ENCODE measurements at regions of chr10 and their contacts with region 1.

Region 1: GRCh38 chr10:124916585-124917427 is 25.1 kb upstream of the ZRANB1 start:
- DNase-seq: peak; percentile 93 to 97 (median 96)
- ATAC-seq: peak; percentile 95
- H3K4me3 ChIP-seq: peak overlapping the region; percentile 97
- H3K4me3 Mint-ChIP-seq: peak overlapping the region; percentile 86 to 99 (median 94)
- H3K27ac ChIP-seq: peak overlapping the region; percentile 98
- H3K27ac Mint-ChIP-seq: peak overlapping the region; percentile 89 to 99 (median 94)
- H3K4me1 ChIP-seq: peaks cover 15 to 17% of the 10 kb centered on the region in 2 donors
- H3K4me1 Mint-ChIP-seq: peaks cover 30 to 49% (median 44%) of the 10 kb centered on the region in 7 donors
- H3K27me3 ChIP-seq: no peaks in the 10 kb centered on the region
- H3K27me3 Mint-ChIP-seq: peaks cover 0 to 8% (median 0%) of the 10 kb centered on the region in 5 donors

Region 2: DNA sequence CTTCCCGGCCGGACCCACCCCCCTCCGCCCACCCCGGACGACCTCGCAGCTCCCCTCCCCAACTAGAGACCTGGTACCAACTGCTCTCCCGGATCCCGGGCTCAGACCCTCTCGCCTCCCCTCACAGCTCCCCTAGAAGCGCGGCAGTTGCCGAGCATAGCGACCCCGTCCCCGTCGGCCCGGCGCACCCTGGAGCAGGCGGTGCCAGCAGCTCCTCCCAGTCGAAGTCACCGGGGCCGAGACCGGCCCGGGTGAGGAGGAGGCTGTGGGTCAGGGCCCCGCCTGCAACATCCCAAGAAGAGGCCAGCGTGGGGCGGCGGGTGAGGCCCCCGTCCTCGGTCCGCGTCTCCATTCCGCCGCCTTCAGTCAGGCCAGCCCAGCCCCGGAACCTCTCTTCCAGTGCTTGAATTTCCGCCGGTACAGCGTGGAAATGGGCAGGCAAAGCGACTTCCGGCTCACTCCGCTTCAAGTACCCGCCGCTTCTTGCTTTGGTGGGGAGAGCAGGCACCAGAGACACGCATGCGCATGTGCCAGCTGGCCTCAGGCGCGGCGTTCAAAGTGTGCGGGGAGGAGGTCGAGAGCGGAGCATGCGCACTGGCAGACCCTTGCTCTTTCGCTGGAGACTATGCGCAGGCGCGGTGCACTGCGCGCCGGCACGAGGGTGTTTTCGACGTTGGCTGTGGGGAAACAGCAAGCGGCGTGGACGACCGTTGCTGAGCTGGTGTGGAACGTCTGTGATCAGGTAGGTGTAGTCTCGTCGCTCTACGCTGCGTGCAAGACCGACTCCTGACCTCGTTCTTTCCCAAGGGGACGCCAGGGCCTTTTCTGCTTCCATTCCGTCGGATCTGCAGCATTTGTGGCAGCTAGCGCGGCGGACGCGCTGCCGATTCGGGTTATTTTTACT is 1962.7 kb before region 1 on chr10 and contains the start of gene C10orf88:
- CTCF ChIA-PET with region 1: no interaction called
- POLR2A ChIA-PET with region 1: no interaction called
- intact Hi-C with region 1: loop called in 1 of 2 experiments (anchors 5 kb)
- DNase-seq: peak; percentile 92 to 98 (median 97)
- ATAC-seq: peak; percentile 97
- H3K4me3 ChIP-seq: peak within 1 kb of the TSS; percentile 69
- H3K4me3 Mint-ChIP-seq: peak within 1 kb of the TSS; percentile 85 to 96 (median 90)
- H3K27ac ChIP-seq: peak within 1 kb of the TSS; percentile 72
- H3K27ac Mint-ChIP-seq: peak within 1 kb of the TSS; percentile 77 to 98 (median 90)
- H3K4me1 ChIP-seq: peaks cover 16% of the 10 kb centered on the region in 2 donors
- H3K4me1 Mint-ChIP-seq: peaks cover 26 to 60% (median 39%) of the 10 kb centered on the region in 7 donors
- H3K27me3 ChIP-seq: no peaks in the 10 kb centered on the region
- H3K27me3 Mint-ChIP-seq: peaks cover 0 to 14% (median 0%) of the 10 kb centered on the region in 5 donors
- total RNA-seq, gene C10orf88: 5.2 to 16.8 (median 12.5) TPM

Region 3: GRCh38 chr10:124388823-124389612 is 527.8 kb before region 1 on chr10:
- CTCF ChIA-PET with region 1: no interaction called
- POLR2A ChIA-PET with region 1: interaction called, 3 read pairs
- intact Hi-C with region 1: loop called in 1 of 2 experiments (anchors 1 kb)
- DNase-seq: peak; percentile 80 to 98 (median 91)
- ATAC-seq: peak; percentile 99
- H3K4me3 ChIP-seq: peak overlapping the region; percentile 68
- H3K4me3 Mint-ChIP-seq: peak overlapping the region in 7 of 10 donors; percentile 25 to 71 (median 59)
- H3K27ac ChIP-seq: peak overlapping the region; percentile 62
- H3K27ac Mint-ChIP-seq: peak overlapping the region in 1 of 9 donors; percentile 49
- H3K4me1 ChIP-seq: peaks cover 4 to 5% of the 10 kb centered on the region in 2 donors
- H3K4me1 Mint-ChIP-seq: peaks cover 0 to 2% (median 0%) of the 10 kb centered on the region in 7 donors
- H3K27me3 ChIP-seq: no peaks in the 10 kb centered on the region
- H3K27me3 Mint-ChIP-seq: peaks cover 0 to 7% (median 5%) of the 10 kb centered on the region in 5 donors

Region 4: DNA sequence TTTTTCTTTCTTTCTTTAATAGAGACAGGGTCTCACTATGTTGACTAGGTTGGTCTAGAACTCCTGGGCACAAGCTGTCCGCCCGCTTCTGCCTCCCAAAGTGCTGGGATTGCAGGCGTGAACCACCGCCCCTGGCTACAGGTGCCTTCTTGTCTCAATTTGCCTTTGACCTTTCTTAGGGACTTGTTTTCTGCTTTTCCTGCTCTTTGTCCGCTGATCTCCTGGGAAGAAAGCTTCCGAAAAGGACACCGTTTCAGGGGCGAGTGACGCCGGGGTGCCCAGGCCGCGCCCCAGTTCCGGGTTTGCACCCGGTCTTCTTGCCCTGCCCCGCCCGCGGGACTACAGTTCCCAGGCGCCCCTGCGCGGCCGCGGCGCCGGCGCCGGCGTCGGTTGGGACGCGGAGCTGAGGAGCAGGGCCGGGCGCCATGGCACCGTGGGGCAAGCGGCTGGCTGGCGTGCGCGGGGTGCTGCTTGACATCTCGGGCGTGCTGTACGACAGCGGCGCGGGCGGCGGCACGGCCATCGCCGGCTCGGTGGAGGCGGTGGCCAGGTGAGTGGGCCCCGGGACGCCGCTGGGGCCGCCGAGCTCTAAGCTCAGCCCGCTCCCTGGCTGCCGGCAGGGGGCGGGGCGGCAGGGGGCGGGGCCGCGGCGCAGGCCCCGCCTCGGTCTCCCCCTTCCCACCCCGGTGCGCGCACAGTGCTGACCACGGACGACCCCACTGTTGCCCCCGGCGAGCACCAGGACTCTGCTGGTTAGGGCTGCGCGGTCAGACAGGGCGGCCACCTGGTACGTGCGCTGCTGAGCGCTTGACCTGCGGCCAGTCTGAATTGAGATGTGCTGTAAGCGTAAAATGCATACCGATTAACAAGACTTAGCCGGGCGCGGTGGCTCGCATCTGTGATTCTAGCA is 455.1 kb before region 1 on chr10 and contains the start of gene LHPP:
- CTCF ChIA-PET with region 1: no interaction called
- POLR2A ChIA-PET with region 1: interaction called, 7 read pairs
- intact Hi-C with region 1: loop called (anchors 1 kb)
- DNase-seq: peak; percentile 77 to 91 (median 87)
- ATAC-seq: peak; percentile 98
- H3K4me3 ChIP-seq: peak within 1 kb of the TSS; percentile 76
- H3K4me3 Mint-ChIP-seq: peak within 1 kb of the TSS; percentile 69 to 96 (median 90)
- H3K27ac ChIP-seq: peak within 1 kb of the TSS; percentile 76
- H3K27ac Mint-ChIP-seq: peak within 1 kb of the TSS; percentile 82 to 98 (median 96)
- H3K4me1 ChIP-seq: peaks cover 13 to 21% of the 10 kb centered on the region in 2 donors
- H3K4me1 Mint-ChIP-seq: peaks cover 23 to 35% (median 28%) of the 10 kb centered on the region in 7 donors
- H3K27me3 ChIP-seq: no peaks in the 10 kb centered on the region
- H3K27me3 Mint-ChIP-seq: peaks cover 0 to 17% (median 11%) of the 10 kb centered on the region in 5 donors
- total RNA-seq, gene LHPP: 19.8 to 31.2 (median 27.6) TPM

Region 5: DNA sequence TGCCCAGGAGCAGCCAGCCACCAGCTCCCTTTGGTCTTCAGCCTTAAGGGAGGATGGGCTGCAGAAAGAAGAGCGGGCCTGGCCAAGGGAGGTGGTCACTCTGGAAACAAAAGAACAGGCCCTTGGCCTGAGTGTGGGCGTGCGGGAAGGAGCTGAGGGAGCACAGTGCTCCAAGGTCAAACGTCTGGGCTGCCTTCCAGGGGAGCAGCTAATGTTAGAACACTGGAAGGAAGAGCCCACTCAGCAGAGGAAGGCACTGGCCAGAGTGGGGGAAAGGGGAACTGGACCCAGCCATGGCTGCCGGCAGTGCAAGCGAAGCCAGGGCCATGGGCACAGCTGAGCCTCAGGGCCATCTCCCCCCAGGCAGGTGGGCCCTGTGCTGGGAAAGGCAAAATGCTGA is 215.4 kb before region 1 on chr10:
- CTCF ChIA-PET with region 1: no interaction called
- POLR2A ChIA-PET with region 1: no interaction called
- intact Hi-C with region 1: no loop called
- DNase-seq: no peak
- ATAC-seq: no peak
- H3K4me3 ChIP-seq: no peak overlapping the region
- H3K4me3 Mint-ChIP-seq: peak overlapping the region; percentile 43 to 84 (median 58)
- H3K27ac ChIP-seq: peak overlapping the region; percentile 67
- H3K27ac Mint-ChIP-seq: peak overlapping the region; percentile 66 to 98 (median 92)
- H3K4me1 ChIP-seq: peaks cover 94% of the 10 kb centered on the region in 2 donors
- H3K4me1 Mint-ChIP-seq: peaks cover 85 to 100% (median 96%) of the 10 kb centered on the region in 7 donors
- H3K27me3 ChIP-seq: no peaks in the 10 kb centered on the region
- H3K27me3 Mint-ChIP-seq: no peaks in the 10 kb centered on the region

Region 6: DNA sequence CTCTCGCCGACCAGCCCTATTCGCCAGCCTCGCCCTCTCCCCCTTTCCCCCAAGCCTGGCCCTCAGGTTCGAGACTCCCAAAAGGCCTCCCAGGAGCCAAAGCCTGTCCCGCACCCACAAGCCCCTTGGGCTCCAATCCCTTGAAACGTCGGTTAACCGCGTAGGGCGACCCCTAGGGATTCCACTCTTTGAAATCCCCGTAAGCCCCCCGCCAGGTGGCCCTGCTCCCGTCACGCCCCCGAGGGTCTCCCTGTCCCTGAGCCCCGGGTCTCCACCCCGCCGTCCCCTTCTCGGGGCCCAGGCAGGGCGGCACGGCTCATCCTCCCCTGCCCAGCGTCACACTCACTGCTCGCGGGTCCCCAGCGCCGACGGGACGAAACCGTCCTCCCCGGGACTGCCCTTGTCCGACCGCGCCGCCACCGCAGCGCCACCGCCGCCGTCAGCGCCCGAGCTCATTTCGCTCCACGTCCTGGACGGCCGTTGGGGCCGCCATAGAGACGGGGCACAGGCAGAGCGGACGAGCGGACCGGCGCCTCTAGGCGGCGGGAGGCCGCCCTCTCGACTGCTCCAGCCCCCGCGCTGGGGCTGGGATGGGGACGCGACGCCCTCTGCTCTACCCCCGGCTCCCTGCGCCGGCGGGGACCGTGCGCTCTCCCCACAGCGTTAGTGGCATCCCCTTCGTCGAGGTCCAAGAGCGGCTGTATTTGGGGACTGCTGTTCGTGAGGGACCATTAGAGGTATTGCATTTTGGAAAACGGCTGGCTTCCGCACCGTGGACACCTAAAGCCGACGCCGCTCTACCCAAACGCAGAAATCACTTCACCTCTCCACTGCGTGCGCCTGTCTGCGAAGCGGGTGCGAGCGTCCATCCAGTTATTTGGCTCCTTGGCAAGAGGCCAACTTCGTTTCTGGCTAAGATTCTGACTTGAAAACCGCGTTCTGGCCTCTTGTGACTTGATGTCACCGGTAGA is 125.1 kb before region 1 on chr10 and contains the start of gene EEF1AKMT2:
- CTCF ChIA-PET with region 1: interaction called, 3 read pairs
- POLR2A ChIA-PET with region 1: interaction called, 6 read pairs
- intact Hi-C with region 1: loop called (anchors 1 kb)
- DNase-seq: peak; percentile 68 to 88 (median 81)
- ATAC-seq: peak; percentile 99
- H3K4me3 ChIP-seq: peak within 1 kb of the TSS; percentile 92
- H3K4me3 Mint-ChIP-seq: peak within 1 kb of the TSS; percentile 90 to 100 (median 98)
- H3K27ac ChIP-seq: peak within 1 kb of the TSS; percentile 77
- H3K27ac Mint-ChIP-seq: peak within 1 kb of the TSS; percentile 89 to 96 (median 95)
- H3K4me1 ChIP-seq: peaks cover 5 to 9% of the 10 kb centered on the region in 2 donors
- H3K4me1 Mint-ChIP-seq: peaks cover 11 to 30% (median 21%) of the 10 kb centered on the region in 7 donors
- H3K27me3 ChIP-seq: no peaks in the 10 kb centered on the region
- H3K27me3 Mint-ChIP-seq: peaks cover 0 to 7% (median 0%) of the 10 kb centered on the region in 5 donors
- total RNA-seq, gene EEF1AKMT2: 11.5 to 23.0 (median 21.0) TPM

Region 7: DNA sequence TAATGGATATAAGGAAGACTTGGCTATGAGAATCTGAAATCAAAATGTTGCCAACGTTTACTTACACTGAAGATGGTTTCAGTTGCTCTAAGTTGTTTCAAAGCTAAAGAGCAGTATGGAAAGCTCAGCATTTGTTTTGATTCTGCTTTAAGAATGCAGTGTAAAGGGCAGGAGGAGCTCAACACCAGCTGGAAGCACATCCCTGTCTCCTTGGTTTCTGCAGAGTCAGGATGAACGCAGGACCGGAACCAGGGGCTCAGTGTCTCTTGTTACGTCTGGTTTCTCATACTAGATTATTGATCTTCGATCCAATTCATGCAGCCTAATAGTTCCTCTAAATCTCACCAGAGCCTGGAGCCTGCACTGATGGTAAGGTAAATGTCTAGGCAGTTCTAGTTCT is 49.2 kb after region 1 on chr10:
- CTCF ChIA-PET with region 1: no interaction called
- POLR2A ChIA-PET with region 1: interaction called, 3 read pairs
- intact Hi-C with region 1: loop called in 1 of 2 experiments (anchors 5 kb)
- DNase-seq: no peak
- ATAC-seq: no peak
- H3K4me3 ChIP-seq: no peak overlapping the region
- H3K4me3 Mint-ChIP-seq: no peak overlapping the region
- H3K27ac ChIP-seq: no peak overlapping the region
- H3K27ac Mint-ChIP-seq: no peak overlapping the region
- H3K4me1 ChIP-seq: peaks cover 0 to 6% of the 10 kb centered on the region in 2 donors
- H3K4me1 Mint-ChIP-seq: peaks cover 14 to 75% (median 67%) of the 10 kb centered on the region in 7 donors
- H3K27me3 ChIP-seq: no peaks in the 10 kb centered on the region
- H3K27me3 Mint-ChIP-seq: no peaks in the 10 kb centered on the region

Region 8: GRCh38 chr10:125822878-125823662 is 906.3 kb after region 1 on chr10 and contains the starts of genes BCCIP and UROS:
- CTCF ChIA-PET with region 1: no interaction called
- POLR2A ChIA-PET with region 1: interaction called, 3 read pairs
- intact Hi-C with region 1: loop called (anchors 2 to 5 kb)
- DNase-seq: peak; percentile 88 to 98 (median 94)
- ATAC-seq: peak; percentile 92
- H3K4me3 ChIP-seq: peak within 1 kb of the TSS; percentile 97
- H3K4me3 Mint-ChIP-seq: peak within 1 kb of the TSS in 6 of 10 donors; percentile 85 to 89 (median 87)
- H3K27ac ChIP-seq: peak within 1 kb of the TSS; percentile 76
- H3K27ac Mint-ChIP-seq: peak within 1 kb of the TSS in 8 of 9 donors; percentile 16 to 88 (median 80)
- H3K4me1 ChIP-seq: peaks cover 11 to 21% of the 10 kb centered on the region in 2 donors
- H3K4me1 Mint-ChIP-seq: peaks cover 3 to 33% (median 22%) of the 10 kb centered on the region in 7 donors
- H3K27me3 ChIP-seq: no peaks in the 10 kb centered on the region
- H3K27me3 Mint-ChIP-seq: no peaks in the 10 kb centered on the region
- total RNA-seq, gene BCCIP: 31.3 to 68.4 (median 45.8) TPM
- total RNA-seq, gene UROS: 28.9 to 53.0 (median 41.3) TPM

Measured in naive thymus-derived CD4-positive, alpha-beta T cell (primary cell).